HEK293 (cell line): ENCODE measurements at regions of chr16 and their contacts with region 1.

Region 1: GRCh38 chr16:31117391-31118197 is at the start of gene KAT8:
- H3K4me3 ChIP-seq: peak within 1 kb of the TSS; percentile 75
- H3K27ac ChIP-seq: peak within 1 kb of the TSS; percentile 57
- H3K4me1 ChIP-seq: peaks cover 4% of the 10 kb centered on the region; the same call in 1 of the 2 replicates
- CTCF ChIP-seq: no peak

Region 2: DNA sequence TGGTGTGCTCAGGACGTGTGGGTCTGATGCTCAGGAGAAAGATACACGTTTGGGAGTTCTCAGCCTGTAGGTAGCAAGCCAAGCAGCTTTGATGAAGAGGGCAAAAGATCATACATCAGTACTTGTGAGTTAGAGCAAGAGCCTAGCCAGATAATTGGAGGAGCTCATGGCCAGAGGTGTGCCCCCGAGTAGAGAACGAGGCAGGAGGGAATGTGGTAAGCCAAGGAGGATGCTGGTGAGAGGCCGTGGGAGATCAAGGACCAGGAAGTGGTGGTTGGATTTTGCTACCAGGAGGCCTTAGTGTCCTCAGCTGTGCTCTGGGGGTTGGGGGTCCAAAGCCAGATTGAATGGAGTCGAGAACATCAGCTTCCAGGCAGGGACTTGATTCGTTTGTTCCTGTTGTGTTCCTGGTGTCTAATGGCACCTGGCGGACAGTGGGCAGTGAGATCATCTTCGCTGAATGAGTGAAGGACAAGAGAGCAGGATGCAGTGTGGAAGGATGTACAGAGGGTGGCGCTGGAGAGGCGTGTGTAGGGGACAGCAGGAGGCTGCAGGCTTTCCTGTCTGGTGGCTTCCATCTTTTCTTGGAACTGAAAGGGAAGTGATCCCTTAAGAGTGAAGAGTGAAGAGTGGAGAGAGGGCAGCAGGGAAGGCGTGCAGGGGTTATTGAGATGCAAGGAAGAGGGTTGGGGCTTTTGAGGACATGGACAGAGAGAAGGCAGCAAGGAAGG is 182.6 kb before region 1 on chr16:
- CTCF ChIA-PET with region 1: no interaction called
- POLR2A ChIA-PET with region 1: no interaction called
- H3K4me3 ChIP-seq: no peak overlapping the region
- H3K27ac ChIP-seq: no peak overlapping the region
- H3K4me1 ChIP-seq: no peaks in the 10 kb centered on the region
- CTCF ChIP-seq: peak; percentile 82

Region 3: GRCh38 chr16:31084616-31085260 is 32.9 kb before region 1 on chr16:
- CTCF ChIA-PET with region 1: no interaction called
- POLR2A ChIA-PET with region 1: interaction called, 11 read pairs
- H3K4me3 ChIP-seq: no peak overlapping the region
- H3K27ac ChIP-seq: no peak overlapping the region
- H3K4me1 ChIP-seq: no peaks in the 10 kb centered on the region
- CTCF ChIP-seq: no peak

Region 4: DNA sequence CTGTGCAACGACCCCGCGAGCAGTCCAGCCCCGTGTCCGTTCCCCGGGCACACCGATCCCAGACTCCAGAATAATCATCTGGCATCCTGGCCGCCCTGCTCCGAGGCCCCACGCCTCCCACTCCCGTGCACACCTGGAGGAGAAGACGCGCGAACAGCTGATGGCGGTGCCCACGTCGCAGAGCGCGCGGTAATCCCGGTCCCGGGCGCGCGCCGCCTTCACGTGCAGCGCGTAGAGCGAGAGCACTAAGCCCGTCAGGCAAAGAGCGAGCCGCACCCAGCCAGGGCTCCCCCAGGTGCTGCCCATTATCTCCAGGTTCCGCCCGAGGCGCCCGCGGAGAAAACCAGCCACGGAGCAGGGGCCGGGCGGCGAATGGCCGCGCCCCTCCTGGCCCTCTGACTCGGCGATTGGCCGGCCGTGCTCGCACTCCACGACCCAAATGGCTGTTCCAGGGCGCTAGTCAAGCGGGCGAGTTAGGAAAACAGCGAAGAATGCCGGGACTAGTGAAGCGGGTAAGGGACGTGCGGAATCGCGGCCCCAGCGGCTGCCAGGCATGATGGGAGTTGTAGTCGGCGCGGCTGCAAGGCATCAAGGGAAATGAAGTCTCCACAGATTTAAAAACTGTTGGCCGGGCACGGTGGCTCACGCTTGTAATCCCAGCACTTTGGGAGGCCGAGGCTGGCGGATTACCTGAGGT is 23.0 kb before region 1 on chr16 and contains the start of gene VKORC1:
- CTCF ChIA-PET with region 1: no interaction called
- POLR2A ChIA-PET with region 1: interaction called, 13 read pairs
- H3K4me3 ChIP-seq: peak within 1 kb of the TSS; percentile 79
- H3K27ac ChIP-seq: peak within 1 kb of the TSS; percentile 85
- H3K4me1 ChIP-seq: peaks cover 3% of the 10 kb centered on the region; the same call in 1 of the 2 replicates
- CTCF ChIP-seq: no peak

Region 5: GRCh38 chr16:31099860-31100638 is 17.5 kb before region 1 on chr16:
- CTCF ChIA-PET with region 1: no interaction called
- POLR2A ChIA-PET with region 1: interaction called, 11 read pairs
- H3K4me3 ChIP-seq: no peak overlapping the region
- H3K27ac ChIP-seq: no peak overlapping the region
- H3K4me1 ChIP-seq: no peaks in the 10 kb centered on the region
- CTCF ChIP-seq: no peak

Region 6: GRCh38 chr16:31128711-31129567 is 11.3 kb after region 1 on chr16:
- CTCF ChIA-PET with region 1: no interaction called
- POLR2A ChIA-PET with region 1: interaction called, 35 read pairs
- H3K4me3 ChIP-seq: no peak overlapping the region
- H3K27ac ChIP-seq: no peak overlapping the region
- H3K4me1 ChIP-seq: peaks cover under 1% of the 10 kb centered on the region; the same call in 1 of the 2 replicates
- CTCF ChIP-seq: no peak

Region 7: GRCh38 chr16:31135548-31136286 is 18.1 kb after region 1 on chr16 and contains the start of gene PRSS8:
- CTCF ChIA-PET with region 1: no interaction called
- POLR2A ChIA-PET with region 1: interaction called, 35 read pairs
- H3K4me3 ChIP-seq: no peak within 1 kb of the TSS
- H3K27ac ChIP-seq: no peak within 1 kb of the TSS
- H3K4me1 ChIP-seq: peaks cover 11% of the 10 kb centered on the region; the same call in 1 of the 2 replicates
- CTCF ChIP-seq: no peak

Region 8: GRCh38 chr16:31142109-31143010 is 24.8 kb after region 1 on chr16:
- CTCF ChIA-PET with region 1: interaction called, 24 read pairs
- POLR2A ChIA-PET with region 1: interaction called, 104 read pairs
- H3K4me3 ChIP-seq: peak overlapping the region; percentile 27
- H3K27ac ChIP-seq: peak overlapping the region; percentile 63; the same call in 1 of the 2 replicates
- H3K4me1 ChIP-seq: no peaks in the 10 kb centered on the region; the same call in 1 of the 2 replicates
- CTCF ChIP-seq: peak; percentile 96

Region 9: DNA sequence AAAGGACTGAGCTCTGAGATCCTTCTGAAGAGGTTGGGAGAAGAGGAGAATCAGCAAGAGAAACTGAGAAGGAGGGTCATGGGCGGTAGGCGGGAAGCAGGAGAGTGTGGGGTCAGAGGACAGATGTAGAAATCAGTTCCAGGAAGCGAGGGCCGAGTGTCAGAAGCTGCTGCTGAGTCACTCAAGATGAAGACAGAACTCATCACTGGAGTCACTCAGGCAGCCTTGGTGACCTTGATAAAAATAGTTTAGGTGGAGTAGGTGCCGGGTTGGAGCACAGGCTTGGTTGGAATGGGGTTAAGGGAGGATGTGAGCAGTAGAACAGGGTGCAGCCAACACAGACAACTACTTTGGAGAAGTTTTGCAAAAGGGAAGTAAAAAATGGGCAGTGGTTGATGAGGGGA is 136.1 kb after region 1 on chr16:
- CTCF ChIA-PET with region 1: no interaction called
- POLR2A ChIA-PET with region 1: no interaction called
- H3K4me3 ChIP-seq: no peak overlapping the region
- H3K27ac ChIP-seq: no peak overlapping the region
- H3K4me1 ChIP-seq: no peaks in the 10 kb centered on the region
- CTCF ChIP-seq: no peak